ENCODE measurements at regions of chr19 and their contacts with region 1.

Region 1: GRCh38 chr19:3035542-3036118 is 6.5 kb upstream of the TLE2 start:
- DNase-seq: peak; percentile 99
- H3K4me3 ChIP-seq: peak overlapping the region; percentile 36 to 86 (median 71)
- H3K27ac ChIP-seq: peak overlapping the region in 1 of 2 experiments; percentile 71
- H3K4me1 ChIP-seq: peaks cover 0 to 23% (median 19%) of the 10 kb centered on the region in 4 experiments
- H3K27me3 ChIP-seq: peaks cover 0 to 13% (median 4%) of the 10 kb centered on the region in 5 experiments

Region 2: DNA sequence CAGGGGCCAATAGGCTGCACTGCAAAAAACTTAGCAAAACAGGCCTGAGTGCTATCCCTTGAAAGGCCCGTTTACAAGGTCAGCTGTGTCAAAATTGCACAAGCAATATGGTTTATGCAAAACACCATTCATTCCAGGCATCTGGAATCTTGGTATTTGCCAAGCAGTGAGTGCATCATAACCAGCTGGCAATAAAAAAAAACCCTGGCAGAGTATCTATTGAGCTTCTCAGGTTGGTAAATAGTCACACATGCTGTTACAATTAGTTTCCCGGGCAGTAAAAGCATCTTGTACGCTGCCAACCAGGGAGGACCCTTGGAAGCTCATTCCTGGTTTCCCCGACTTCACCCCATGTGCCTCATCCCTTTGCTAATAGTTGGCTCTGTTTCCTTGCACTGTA is 112.1 kb before region 1 on chr19:
- CTCF ChIA-PET with region 1: no interaction called
- POLR2A ChIA-PET with region 1: no interaction called
- DNase-seq: no peak
- H3K4me3 ChIP-seq: no peak overlapping the region
- H3K27ac ChIP-seq: no peak overlapping the region
- H3K4me1 ChIP-seq: no peaks in the 10 kb centered on the region
- H3K27me3 ChIP-seq: no peaks in the 10 kb centered on the region

Region 3: DNA sequence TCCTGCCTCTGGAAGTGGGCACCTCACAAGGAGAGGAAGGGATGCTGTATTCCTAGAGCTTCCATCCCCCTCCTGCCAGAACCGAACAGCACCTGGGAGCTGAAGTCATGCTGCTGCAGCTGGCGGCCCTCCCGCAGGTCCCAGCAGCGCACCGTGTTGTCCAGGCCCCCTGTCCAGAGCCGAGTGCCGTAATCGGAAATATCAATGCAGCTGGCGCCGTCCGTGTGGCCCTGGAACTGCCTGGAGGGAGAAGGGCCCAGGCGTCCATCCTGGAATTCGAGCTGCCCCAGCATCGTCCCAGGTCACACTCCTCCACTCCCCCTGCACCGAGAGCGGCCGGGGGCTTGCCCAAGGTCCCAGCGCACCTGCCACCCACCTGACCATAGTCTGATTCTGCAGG is 30.3 kb before region 1 on chr19:
- CTCF ChIA-PET with region 1: no interaction called
- POLR2A ChIA-PET with region 1: no interaction called
- DNase-seq: no peak
- H3K4me3 ChIP-seq: no peak overlapping the region
- H3K27ac ChIP-seq: no peak overlapping the region
- H3K4me1 ChIP-seq: no peaks in the 10 kb centered on the region
- H3K27me3 ChIP-seq: peaks cover 0 to 5% (median 0%) of the 10 kb centered on the region in 5 experiments

Region 4: GRCh38 chr19:3046698-3047424 is 11.2 kb after region 1 on chr19:
- CTCF ChIA-PET with region 1: interaction called, 12 read pairs
- POLR2A ChIA-PET with region 1: interaction called, 3 read pairs
- DNase-seq: peak; percentile 52 to 54 (median 53)
- H3K4me3 ChIP-seq: peak overlapping the region in 4 of 7 experiments; percentile 59 to 66 (median 64)
- H3K27ac ChIP-seq: peak overlapping the region in 1 of 2 experiments; percentile 58
- H3K4me1 ChIP-seq: peaks cover 3 to 28% (median 14%) of the 10 kb centered on the region in 4 experiments
- H3K27me3 ChIP-seq: no peaks in the 10 kb centered on the region

Region 5: DNA sequence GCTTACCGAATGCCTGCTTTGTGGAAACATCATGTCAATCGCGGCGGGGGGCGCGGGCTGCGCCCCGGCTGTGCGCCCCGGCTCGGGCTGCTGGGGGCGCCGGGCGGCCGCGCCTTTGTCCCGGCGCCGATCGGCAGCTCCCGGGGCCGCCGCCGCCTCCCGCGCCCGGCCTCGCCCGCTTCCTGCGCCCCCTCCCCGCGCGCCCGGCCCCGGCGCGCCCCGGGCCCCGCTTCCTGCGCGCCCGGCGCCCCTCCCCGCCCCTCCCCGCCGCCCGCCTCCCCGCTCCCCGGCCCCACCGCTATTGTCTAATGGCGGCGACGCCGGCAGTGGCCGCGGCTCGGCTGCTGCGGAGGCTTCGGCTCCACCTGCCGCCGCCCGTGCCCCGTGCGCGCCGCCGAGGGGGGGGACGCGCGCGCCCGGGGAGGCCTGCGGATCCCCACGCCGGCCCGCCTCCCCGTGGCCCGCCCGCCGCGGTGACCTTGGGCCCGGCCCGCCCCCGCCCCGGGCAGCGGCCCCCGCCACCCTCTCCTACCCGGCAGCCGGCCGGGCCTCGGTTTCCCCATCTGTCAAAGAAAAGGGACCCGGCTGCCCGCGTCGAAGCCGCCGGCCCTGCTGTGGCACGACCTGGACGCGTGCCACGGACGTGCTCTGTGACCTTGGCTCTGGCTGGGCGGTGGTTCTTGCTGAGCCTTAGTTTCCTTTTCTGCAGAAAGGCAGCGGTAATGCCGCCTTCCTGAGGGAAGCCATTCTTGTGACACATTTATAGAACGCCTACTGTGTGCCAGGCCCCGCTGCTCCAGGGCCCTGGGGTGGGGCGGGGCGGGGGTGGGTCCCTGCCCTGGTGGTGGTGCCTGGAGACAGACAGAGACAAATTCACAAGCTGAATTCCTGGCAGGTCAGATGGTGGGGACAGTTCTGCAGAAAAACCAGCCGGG is 26.8 kb after region 1 on chr19 and contains the start of gene TLE5:
- CTCF ChIA-PET with region 1: interaction called, 13 read pairs
- POLR2A ChIA-PET with region 1: interaction called, 7 read pairs
- DNase-seq: peak; percentile 56 to 77 (median 67)
- H3K4me3 ChIP-seq: peak within 1 kb of the TSS; percentile 70 to 87 (median 80)
- H3K27ac ChIP-seq: peak within 1 kb of the TSS in 1 of 2 experiments; percentile 75
- H3K4me1 ChIP-seq: peaks cover 0 to 43% (median 31%) of the 10 kb centered on the region in 4 experiments
- H3K27me3 ChIP-seq: no peaks in the 10 kb centered on the region

Measured in common myeloid progenitor, CD34-positive (primary cell).